B cell (primary cell): ENCODE measurements at regions of chr3 and their contacts with region 1.

Region 1: DNA sequence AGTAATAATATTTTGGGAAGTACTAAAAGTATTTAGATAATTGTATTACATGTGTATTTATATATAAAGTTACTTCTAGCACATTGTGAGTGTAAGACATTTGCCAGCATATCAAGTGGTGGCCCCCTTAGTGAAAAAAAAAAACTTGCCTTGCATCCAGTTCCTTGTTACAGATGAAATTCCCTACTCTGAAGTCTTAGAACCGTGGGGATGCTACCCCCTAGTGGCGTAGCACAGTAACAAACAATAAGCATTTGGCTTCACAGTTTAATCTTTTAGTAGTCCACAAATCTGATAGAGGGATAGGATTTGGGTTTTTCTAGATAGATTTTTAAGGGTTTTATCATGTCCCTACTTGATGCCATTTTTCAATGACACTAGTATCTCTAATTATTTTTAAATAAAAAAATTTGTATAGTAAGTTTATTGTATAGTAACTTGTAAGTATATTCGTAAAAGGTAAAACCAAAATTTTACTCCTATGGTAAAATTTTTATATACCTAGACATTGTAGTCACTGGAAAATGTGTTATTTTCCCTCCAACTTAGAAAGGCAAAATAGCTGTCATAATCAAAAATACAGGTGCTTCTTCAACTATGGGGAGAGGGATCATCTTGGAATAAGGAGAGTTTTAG is 14.3 kb downstream of the SMC4 start:
- DNase-seq: peak; percentile 78
- ATAC-seq: peak; percentile 80
- H3K4me3 ChIP-seq: no peak overlapping the region
- H3K4me3 Mint-ChIP-seq: no peak overlapping the region
- H3K27ac ChIP-seq: no peak overlapping the region
- H3K27ac Mint-ChIP-seq: no peak overlapping the region
- H3K4me1 ChIP-seq: no peaks in the 10 kb centered on the region
- H3K4me1 Mint-ChIP-seq: no peaks in the 10 kb centered on the region
- H3K27me3 ChIP-seq: no peaks in the 10 kb centered on the region
- H3K27me3 Mint-ChIP-seq: no peaks in the 10 kb centered on the region
- CTCF ChIP-seq: peak; percentile 98

Region 2: GRCh38 chr3:159828542-159828943 is 585.2 kb before region 1 on chr3:
- CTCF ChIA-PET with region 1: interaction called, 4 read pairs
- POLR2A ChIA-PET with region 1: no interaction called
- intact Hi-C with region 1: loop called (anchors 1 kb)
- DNase-seq: peak; percentile 34
- ATAC-seq: peak; percentile 47
- H3K4me3 ChIP-seq: no peak overlapping the region
- H3K4me3 Mint-ChIP-seq: no peak overlapping the region
- H3K27ac ChIP-seq: no peak overlapping the region
- H3K27ac Mint-ChIP-seq: no peak overlapping the region
- H3K4me1 ChIP-seq: peaks cover 7% of the 10 kb centered on the region in 2 donors
- H3K4me1 Mint-ChIP-seq: peaks cover 1% of the 10 kb centered on the region
- H3K27me3 ChIP-seq: no peaks in the 10 kb centered on the region
- H3K27me3 Mint-ChIP-seq: no peaks in the 10 kb centered on the region
- CTCF ChIP-seq: peak; percentile 68

Region 3: DNA sequence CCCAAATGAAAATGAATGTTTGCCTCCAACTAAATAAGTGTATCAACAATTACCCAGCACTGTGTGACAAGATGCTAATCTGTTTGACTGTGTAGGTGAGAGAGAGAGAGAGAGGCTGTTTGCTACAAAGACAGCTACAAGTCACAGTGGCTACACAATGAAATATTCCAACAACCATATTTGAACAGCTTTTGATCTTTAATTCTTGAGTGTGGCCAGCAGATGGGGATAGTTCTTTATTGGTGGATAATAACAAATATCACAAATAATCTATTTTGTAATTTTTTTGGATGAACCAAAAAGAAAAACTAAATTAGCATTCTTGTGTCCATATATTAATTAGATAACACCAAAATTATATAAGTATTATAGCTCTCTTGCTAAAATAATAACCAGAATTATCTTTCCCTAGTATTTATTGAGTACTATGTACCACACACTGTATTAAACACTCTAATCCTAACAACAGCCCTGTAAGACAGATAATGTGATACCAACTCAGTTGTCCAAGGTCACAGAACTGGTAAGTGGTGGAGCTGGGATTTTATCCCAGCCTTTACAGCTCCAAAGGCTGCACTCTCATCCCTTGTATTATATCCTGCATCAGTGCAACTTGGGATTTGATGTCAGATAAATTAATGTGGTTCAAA is 250.4 kb before region 1 on chr3:
- CTCF ChIA-PET with region 1: interaction called, 10 read pairs
- POLR2A ChIA-PET with region 1: no interaction called
- intact Hi-C with region 1: no loop called
- DNase-seq: no peak
- ATAC-seq: no peak
- H3K4me3 ChIP-seq: no peak overlapping the region
- H3K4me3 Mint-ChIP-seq: no peak overlapping the region
- H3K27ac ChIP-seq: no peak overlapping the region
- H3K27ac Mint-ChIP-seq: no peak overlapping the region
- H3K4me1 ChIP-seq: no peaks in the 10 kb centered on the region
- H3K4me1 Mint-ChIP-seq: no peaks in the 10 kb centered on the region
- H3K27me3 ChIP-seq: no peaks in the 10 kb centered on the region
- H3K27me3 Mint-ChIP-seq: peaks cover 8% of the 10 kb centered on the region
- CTCF ChIP-seq: no peak